A549 (cell line): ENCODE measurements at regions of chr6 and their contacts with region 1.

Region 1: GRCh38 chr6:41705996-41706835 is 29.2 kb downstream of the TFEB start:
- DNase-seq: peak; percentile 69 to 78
- ATAC-seq: peak; percentile 90 to 96
- H3K4me3 ChIP-seq: no peak overlapping the region
- H3K27ac ChIP-seq: peak overlapping the region; percentile 85 to 97
- H3K4me1 ChIP-seq: peaks cover 32% of the 10 kb centered on the region
- CTCF ChIP-seq: peak; percentile 66
- EP300 ChIP-seq: no peak
- POLR2A ChIP-seq: no peak
- RAD21 ChIP-seq: peak; percentile 61 to 66

Region 2: DNA sequence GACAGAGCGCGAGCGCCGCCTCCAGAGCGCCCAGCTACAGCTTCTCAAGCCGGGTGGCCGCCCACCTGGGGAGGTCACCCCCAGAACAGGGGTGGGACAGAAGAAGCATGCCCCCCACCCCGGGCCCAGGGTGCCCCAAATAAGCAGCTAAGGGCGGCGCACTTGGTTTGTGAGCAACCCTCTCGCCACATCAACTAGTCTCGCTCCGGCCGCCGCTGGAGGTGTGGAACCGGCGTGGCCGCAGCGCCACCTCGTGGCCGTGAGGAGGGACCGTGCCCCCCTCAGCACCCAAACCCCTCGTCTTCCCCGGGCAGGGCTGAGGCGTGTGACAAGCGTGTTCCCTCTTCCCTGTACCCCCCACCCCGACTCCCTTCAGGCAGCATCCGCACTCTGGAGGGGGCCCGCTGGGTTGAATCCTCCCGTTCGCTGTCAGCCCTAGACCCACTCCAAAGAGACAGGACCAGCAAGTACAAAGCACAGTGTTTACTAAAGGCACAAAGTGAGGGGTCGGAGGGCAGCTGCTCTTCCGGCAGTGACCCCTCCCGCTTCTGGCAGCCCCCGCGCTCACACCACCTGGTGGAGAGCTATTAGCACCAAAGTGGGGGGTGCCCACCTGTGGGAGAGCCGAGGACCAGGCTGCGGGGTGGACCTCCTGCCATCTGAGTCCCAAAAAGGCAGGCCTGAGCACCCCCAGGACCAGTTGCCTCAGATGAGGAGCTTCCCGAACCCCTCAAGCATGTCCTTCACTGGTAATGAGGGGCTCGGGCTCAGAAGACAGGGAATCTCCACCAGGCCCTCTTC is 22.5 kb before region 1 on chr6:
- CTCF ChIA-PET with region 1: interaction called, 66 read pairs
- POLR2A ChIA-PET with region 1: no interaction called
- DNase-seq: peak; percentile 53 to 65
- ATAC-seq: peak; percentile 84 to 90
- H3K4me3 ChIP-seq: no peak overlapping the region
- H3K27ac ChIP-seq: peak overlapping the region in 1 of 2 experiments; percentile 56; a peak in 2 of 6 replicates
- H3K4me1 ChIP-seq: 0 out of 3 replicates have a peak, but pooled peaks cover 3% of the 10 kb centered on the region
- CTCF ChIP-seq: peak; percentile 74
- EP300 ChIP-seq: no peak
- POLR2A ChIP-seq: no peak
- RAD21 ChIP-seq: peak; percentile 75 to 83

Region 3: DNA sequence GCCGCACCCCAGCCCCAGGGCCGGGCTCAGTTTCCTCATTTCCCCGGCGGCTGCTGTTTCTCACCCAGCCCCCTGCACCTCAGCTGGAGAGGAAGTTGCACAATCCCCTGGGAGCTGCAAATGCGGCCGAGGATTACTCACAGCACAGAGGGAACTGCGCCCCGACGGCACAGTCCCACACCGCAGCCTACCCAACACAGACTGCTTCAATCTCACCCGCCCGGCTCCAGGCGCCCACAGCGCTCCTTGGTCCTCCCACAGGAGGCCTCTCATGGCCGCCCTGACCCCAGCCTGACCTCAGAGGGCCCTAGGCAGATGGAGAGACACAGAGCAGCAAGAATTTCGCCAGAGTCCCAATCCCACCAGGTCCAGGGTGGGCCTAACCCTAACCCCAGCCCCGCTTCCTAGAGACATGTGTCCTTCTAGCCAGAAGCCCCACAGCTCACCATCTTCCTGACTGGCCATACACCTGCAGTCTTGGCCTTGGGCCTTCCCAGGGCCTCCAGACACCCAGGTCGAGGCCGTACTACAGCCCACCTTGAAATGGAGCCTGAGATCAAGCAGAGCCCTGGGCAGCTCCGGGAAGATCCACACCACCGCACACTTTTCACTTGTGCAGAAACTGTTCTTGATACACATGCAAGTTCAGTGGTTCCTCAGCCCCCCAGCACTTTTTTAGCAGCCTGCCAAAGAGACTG is 17.5 kb after region 1 on chr6:
- CTCF ChIA-PET with region 1: interaction called, 31 read pairs
- POLR2A ChIA-PET with region 1: no interaction called
- DNase-seq: peak; percentile 63 to 83
- ATAC-seq: peak; percentile 97
- H3K4me3 ChIP-seq: peak overlapping the region; percentile 20; the same call in 1 of the 3 replicates
- H3K27ac ChIP-seq: peak overlapping the region; percentile 76 to 89
- H3K4me1 ChIP-seq: peaks cover 29% of the 10 kb centered on the region
- CTCF ChIP-seq: no peak
- EP300 ChIP-seq: no peak
- POLR2A ChIP-seq: peak; percentile 11; the same call in 1 of the 2 replicates
- RAD21 ChIP-seq: no peak

Region 4: DNA sequence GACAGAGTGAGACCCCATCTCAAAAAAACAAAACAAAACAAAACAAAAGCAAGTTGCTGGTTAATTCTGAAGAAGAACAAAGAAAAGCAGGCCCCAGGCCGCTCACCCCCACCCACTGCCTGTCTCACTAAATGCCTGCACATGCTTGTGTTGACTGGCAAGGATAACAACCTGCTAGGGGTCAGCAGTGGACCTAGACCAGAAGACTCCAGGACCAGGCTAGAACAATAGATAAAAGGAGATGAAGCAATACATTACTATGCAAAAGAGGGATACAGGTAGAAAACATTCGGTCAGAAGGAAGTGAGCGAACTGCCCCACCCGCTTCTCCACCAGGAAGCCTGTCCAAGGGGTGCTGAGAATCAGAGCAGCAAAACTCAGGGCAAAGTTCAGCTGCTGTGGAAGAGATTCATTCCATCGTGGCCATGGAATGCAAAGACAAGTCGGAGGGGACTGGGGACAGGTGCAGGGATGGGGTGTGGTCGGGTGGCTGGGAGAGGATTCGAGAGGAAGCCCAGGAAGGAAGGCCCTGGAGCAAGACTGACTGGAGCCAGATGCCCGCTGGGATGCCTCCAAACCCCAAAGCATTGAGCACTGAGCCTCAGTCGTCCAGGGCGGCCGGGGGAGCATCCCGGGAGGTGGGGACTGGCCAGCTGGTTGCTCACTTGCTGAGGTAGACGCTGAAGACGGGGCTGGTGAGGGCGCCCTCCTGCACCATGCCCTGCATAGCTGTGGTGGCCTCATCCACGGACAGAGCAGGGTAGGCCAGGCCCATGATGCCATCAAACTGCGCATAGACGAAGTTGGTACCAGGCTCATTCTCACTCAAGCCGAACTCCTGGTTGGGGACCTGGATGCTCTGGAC is 35.6 kb after region 1 on chr6:
- CTCF ChIA-PET with region 1: interaction called, 11 read pairs
- POLR2A ChIA-PET with region 1: no interaction called
- DNase-seq: peak in 1 of 2 experiments; percentile 35
- ATAC-seq: peak in 1 of 2 experiments; percentile 42; a peak in 3 of 6 replicates
- H3K4me3 ChIP-seq: no peak overlapping the region
- H3K27ac ChIP-seq: 0 out of 6 replicates have a peak overlapping the region, but pooled peaks of 1 of the 2 experiments have one; percentile 30
- H3K4me1 ChIP-seq: peaks cover 19% of the 10 kb centered on the region
- CTCF ChIP-seq: no peak
- EP300 ChIP-seq: no peak
- POLR2A ChIP-seq: no peak
- RAD21 ChIP-seq: no peak

Region 5: DNA sequence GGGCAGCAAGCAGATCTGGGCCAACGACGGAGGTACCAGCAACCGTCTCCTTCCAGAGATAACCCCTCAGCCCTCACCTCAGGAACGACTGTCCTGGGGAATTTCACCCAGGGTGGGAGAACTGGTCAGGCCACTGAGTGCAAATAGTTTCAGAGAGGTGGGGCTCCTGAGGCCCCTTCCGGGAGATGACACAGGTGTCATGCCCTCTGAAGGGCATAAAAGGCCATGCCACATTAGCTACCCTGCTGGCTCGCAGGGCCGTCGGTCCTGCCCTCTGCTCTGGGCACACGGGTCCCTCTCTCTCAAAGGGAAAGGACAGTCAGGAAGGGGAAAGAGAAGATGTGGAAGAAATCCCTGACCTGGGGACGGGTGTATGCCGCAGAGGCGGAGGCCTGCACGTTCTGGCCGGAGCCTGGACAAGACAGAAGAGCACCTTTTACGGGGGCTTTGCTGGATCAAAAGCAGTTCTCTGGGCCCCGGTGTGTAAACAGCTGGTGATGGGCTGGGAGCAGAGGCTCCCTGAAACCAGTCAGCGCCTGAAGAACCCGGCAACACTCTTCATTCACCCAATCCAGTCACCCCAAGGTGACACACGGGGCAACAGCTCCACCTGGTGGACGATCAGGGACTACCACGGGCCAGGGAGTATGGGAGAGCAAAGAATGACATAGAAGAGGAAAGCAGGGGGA is 337.7 kb after region 1 on chr6:
- CTCF ChIA-PET with region 1: interaction called, 10 read pairs
- POLR2A ChIA-PET with region 1: no interaction called
- DNase-seq: peak; percentile 81 to 82
- ATAC-seq: peak; percentile 87 to 92
- H3K4me3 ChIP-seq: no peak overlapping the region
- H3K27ac ChIP-seq: peak overlapping the region; percentile 88 to 96
- H3K4me1 ChIP-seq: peaks cover 66% of the 10 kb centered on the region
- CTCF ChIP-seq: peak; percentile 88
- EP300 ChIP-seq: no peak
- POLR2A ChIP-seq: no peak
- RAD21 ChIP-seq: peak; percentile 98